Left cardiac atrium (tissue), 4 donors: ENCODE measurements at regions of chr3 and their contacts with region 1.

Region 1: DNA sequence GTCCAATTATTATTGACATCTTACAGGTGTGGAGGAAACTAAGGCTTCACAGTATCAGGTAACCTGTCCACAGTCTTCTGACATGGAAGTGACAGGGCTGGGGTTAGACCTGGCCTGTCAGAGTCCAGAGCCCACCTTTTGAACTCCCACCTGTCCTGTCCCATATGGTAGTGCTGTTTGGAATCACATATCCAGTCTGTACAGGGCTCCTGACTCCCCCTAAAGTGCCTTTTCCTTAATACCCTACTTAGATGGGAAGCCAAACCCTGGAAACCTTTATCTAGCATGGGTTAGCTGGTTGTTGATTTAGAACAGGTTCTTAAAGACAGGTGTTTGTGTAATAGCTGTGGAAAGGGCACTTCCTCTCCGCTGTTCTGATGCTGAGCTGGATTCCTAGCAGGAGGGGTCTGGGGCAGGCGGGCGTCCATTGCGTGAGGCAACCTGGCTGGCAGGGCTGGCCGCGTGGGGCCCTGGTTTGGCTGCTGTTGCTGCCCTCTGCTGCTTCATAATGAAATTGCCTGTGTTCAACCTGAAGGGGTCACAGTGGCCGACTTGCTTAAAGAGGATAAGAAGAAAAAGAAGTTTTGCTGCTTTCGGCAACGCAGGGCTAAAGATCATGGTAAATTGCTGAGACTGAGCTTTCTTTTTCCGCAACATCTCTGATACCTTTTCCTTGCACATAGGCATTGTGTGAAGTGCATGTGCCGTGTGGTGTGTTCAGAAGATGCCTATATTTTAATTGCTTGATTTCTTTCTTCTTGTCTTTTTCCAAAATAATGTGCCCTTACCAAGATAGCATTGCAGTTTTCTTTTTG is 136.2 kb downstream of the CHDH start:
- DNase-seq: peak; percentile 76
- ATAC-seq: peak; percentile 49 to 65

Region 2: GRCh38 chr3:53303957-53304356 is 406.1 kb before region 1 on chr3:
- intact Hi-C with region 1: loop called in 1 of 2 experiments (anchors 5 kb)
- DNase-seq: no peak
- ATAC-seq: peak; percentile 36 to 54

Region 3: GRCh38 chr3:53375019-53375418 is 335.0 kb before region 1 on chr3:
- intact Hi-C with region 1: loop called in 1 of 2 experiments (anchors 10 kb)
- DNase-seq: peak; percentile 59
- ATAC-seq: peak; percentile 70 to 86

Region 4: GRCh38 chr3:53570699-53571098 is 139.4 kb before region 1 on chr3:
- intact Hi-C with region 1: loop called in 1 of 2 experiments (anchors 2 kb)
- DNase-seq: peak; percentile 43
- ATAC-seq: peak in 1 of 2 donors; percentile 98

Region 5: GRCh38 chr3:53677413-53677812 is 32.7 kb before region 1 on chr3:
- intact Hi-C with region 1: loop called in 1 of 2 experiments (anchors 2 kb)
- DNase-seq: no peak
- ATAC-seq: peak; percentile 38 to 51